BJ (cell line): ENCODE measurements at regions of chr15 and their contacts with region 1.

Region 1: DNA sequence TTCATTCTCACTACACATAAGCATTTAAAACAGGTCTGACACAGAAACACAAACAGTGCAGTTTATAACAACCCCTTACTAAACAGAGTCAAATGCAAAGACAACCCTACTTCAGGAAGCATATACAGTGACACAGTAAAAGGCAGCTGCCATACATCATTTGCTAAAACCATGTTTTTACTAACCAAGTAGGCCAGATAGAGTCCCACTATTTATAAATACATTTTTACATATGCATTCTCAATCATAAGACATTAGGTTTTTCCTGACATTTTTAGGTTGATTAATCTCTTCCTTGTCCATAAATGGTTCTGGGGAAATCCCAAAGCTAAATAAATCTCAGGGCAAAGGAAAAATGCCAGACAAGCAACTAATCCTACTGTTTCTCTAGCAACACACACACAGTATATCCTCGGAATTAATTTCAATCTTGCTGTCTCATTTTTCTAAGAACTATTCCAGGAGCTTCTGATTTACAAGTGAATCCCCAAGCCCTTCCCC is 39.0 kb downstream of the CHAC1 start:
- DNase-seq: no peak
- H3K4me3 ChIP-seq: no peak overlapping the region
- H3K27me3 ChIP-seq: no peaks in the 10 kb centered on the region
- CTCF ChIP-seq: no peak

Region 2: DNA sequence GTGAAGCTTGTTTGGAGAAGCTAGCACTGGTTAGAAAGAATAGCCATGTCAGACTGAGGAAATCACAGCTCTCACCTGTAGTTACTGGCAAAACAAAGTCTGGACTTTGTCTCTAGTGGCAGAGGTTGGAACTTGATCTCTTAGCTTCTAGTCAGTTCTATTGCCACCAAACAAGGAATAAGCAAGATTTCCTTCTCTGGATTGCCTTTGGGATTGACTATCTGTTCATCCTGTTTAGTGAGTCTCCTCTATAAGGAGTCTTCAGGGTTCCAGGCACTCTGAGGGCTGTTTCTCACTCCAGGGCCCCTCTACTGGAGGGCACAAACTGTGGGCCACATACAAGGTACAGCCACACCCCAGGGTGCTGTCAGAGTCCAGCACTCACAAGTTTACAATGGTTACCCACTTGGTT is 1838.1 kb before region 1 on chr15:
- CTCF ChIA-PET with region 1: no interaction called
- POLR2A ChIA-PET with region 1: interaction called, 16 read pairs
- DNase-seq: no peak
- H3K4me3 ChIP-seq: no peak overlapping the region
- H3K27me3 ChIP-seq: no peaks in the 10 kb centered on the region
- CTCF ChIP-seq: 0 out of 2 replicates have a peak, but pooled peaks have one; percentile 15